GM12878 (cell line): ENCODE measurements at regions of chr10 and their contacts with region 1.

Region 1: GRCh38 chr10:24344279-24344678 is 135.3 kb downstream of the KIAA1217 start:
- DNase-seq: no peak
- ATAC-seq: peak; percentile 40; the same call in 2 of the 3 replicates
- H3K4me3 ChIP-seq: no peak overlapping the region
- H3K27ac ChIP-seq: no peak overlapping the region
- H3K4me1 ChIP-seq: no peaks in the 10 kb centered on the region
- H3K27me3 ChIP-seq: no peaks in the 10 kb centered on the region
- CTCF ChIP-seq: no peak
- EP300 ChIP-seq: no peak
- POLR2A ChIP-seq: no peak
- RAD21 ChIP-seq: no peak

Region 2: DNA sequence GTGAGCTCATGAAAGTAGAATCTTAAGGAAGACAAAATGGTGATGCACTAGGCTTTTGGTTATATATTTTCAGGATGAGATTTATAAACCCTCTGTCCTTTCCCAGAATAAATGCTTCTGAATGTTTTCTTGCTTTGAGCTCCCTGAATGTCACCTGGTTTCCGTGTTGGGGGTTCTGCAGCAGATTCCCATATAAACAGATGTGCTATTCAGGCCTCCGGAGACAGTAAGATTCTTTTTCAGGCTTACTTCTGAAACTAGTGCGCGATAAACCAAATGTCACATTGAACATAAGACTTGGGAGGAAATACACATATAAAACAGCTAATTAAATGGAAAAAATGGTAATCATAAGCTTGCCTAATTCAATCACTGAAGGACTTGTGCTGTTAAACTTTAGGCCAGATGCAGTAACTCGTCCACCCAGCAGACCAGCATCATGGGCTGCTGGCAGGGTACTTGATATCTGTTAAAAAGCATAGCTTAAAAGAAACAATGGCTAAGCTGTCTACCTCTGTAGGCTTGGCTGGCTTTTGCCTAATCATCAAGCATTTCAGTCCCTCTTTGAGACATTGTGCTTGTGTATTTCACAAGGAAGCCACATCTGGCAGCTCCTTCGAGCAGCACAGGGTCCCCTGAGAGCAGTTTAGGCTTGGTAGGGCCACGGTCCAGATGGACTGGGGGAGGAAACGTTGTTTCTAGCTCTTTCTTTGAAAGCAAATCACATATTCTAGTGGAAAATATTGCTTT is 416.5 kb before region 1 on chr10:
- CTCF ChIA-PET with region 1: no interaction called
- POLR2A ChIA-PET with region 1: no interaction called
- RAD21 ChIA-PET with region 1: no interaction called
- SMC1A ChIA-PET with region 1: no interaction called
- in situ Hi-C with region 1: no loop called
- intact Hi-C with region 1: no loop called
- DNase-seq: no peak
- ATAC-seq: no peak
- H3K4me3 ChIP-seq: no peak overlapping the region
- H3K27ac ChIP-seq: no peak overlapping the region
- H3K4me1 ChIP-seq: no peaks in the 10 kb centered on the region
- H3K27me3 ChIP-seq: no peaks in the 10 kb centered on the region
- CTCF ChIP-seq: no peak
- EP300 ChIP-seq: no peak
- POLR2A ChIP-seq: no peak
- RAD21 ChIP-seq: no peak

Region 3: DNA sequence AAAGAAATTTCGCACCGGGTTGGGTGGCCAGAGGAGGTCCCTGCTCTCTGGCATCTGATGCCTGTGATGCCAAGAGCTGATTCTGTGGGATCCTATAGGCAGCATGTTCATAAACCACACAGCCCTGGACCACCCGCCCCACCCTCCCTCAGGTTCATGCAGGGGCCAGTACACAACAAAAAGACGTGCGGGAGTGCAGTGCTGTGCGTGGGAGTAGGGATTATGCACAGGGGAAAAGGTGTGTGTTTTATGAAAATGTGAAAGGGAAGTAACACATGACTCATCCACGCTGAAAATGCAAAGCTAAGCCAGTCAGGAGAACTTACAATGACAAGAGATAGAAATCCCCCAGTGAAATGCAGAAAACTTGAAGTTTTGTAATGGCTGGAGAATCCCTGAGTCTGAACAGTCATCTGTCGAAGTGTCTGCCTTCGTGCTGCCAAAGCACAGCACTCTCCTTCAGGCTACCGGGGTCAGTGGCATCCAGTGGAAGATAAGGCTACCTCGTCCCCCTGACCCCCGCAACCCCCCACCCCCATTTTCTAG is 134.3 kb before region 1 on chr10:
- CTCF ChIA-PET with region 1: no interaction called
- POLR2A ChIA-PET with region 1: no interaction called
- RAD21 ChIA-PET with region 1: interaction called, 8 read pairs
- SMC1A ChIA-PET with region 1: interaction called, 16 read pairs
- in situ Hi-C with region 1: no loop called
- intact Hi-C with region 1: no loop called
- DNase-seq: peak; percentile 82
- ATAC-seq: peak; percentile 75
- H3K4me3 ChIP-seq: peak overlapping the region; percentile 62
- H3K27ac ChIP-seq: peak overlapping the region; percentile 62
- H3K4me1 ChIP-seq: peaks cover 9% of the 10 kb centered on the region
- H3K27me3 ChIP-seq: no peaks in the 10 kb centered on the region
- CTCF ChIP-seq: no peak
- EP300 ChIP-seq: peak; percentile 74 to 87; a peak in 2 of 4 replicates
- POLR2A ChIP-seq: no peak
- RAD21 ChIP-seq: no peak

Region 4: DNA sequence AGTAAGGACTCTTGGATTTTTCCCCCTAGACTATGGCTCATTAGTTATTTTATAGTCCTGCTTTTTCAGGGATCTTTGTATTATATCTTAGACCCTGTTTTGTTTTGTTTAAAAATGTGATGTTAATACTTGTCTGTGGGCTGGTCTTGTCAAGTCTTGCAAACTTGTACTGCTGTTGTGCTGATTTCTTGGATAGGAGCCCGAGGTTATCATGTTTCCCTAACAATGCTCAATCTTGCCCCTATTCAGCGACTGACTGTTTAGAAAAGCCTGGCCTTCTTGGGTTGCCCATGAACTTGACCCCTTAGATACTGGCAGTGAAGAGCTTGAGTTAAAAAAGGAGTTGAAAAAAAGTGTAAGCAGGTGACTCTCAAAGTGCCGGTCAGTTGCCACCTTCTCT is 19.6 kb before region 1 on chr10:
- CTCF ChIA-PET with region 1: interaction called, 5 read pairs
- POLR2A ChIA-PET with region 1: no interaction called
- RAD21 ChIA-PET with region 1: interaction called, 3 read pairs
- SMC1A ChIA-PET with region 1: interaction called, 10 read pairs
- in situ Hi-C with region 1: no loop called
- intact Hi-C with region 1: no loop called
- DNase-seq: no peak
- ATAC-seq: no peak
- H3K4me3 ChIP-seq: no peak overlapping the region
- H3K27ac ChIP-seq: no peak overlapping the region
- H3K4me1 ChIP-seq: no peaks in the 10 kb centered on the region
- H3K27me3 ChIP-seq: no peaks in the 10 kb centered on the region
- CTCF ChIP-seq: no peak
- EP300 ChIP-seq: no peak
- POLR2A ChIP-seq: no peak
- RAD21 ChIP-seq: no peak

Region 5: GRCh38 chr10:24642622-24643417 is 298.5 kb after region 1 on chr10:
- CTCF ChIA-PET with region 1: no interaction called
- POLR2A ChIA-PET with region 1: no interaction called
- RAD21 ChIA-PET with region 1: no interaction called
- SMC1A ChIA-PET with region 1: no interaction called
- in situ Hi-C with region 1: no loop called
- intact Hi-C with region 1: no loop called
- DNase-seq: peak; percentile 40
- ATAC-seq: peak; percentile 86
- H3K4me3 ChIP-seq: no peak overlapping the region
- H3K27ac ChIP-seq: no peak overlapping the region
- H3K4me1 ChIP-seq: peaks cover 14% of the 10 kb centered on the region
- H3K27me3 ChIP-seq: no peaks in the 10 kb centered on the region
- CTCF ChIP-seq: peak; percentile 74 to 85 (median 83)
- EP300 ChIP-seq: no peak
- POLR2A ChIP-seq: no peak
- RAD21 ChIP-seq: peak; percentile 96